ENCODE measurements at regions of chr7 and their contacts with region 1.

Region 1: DNA sequence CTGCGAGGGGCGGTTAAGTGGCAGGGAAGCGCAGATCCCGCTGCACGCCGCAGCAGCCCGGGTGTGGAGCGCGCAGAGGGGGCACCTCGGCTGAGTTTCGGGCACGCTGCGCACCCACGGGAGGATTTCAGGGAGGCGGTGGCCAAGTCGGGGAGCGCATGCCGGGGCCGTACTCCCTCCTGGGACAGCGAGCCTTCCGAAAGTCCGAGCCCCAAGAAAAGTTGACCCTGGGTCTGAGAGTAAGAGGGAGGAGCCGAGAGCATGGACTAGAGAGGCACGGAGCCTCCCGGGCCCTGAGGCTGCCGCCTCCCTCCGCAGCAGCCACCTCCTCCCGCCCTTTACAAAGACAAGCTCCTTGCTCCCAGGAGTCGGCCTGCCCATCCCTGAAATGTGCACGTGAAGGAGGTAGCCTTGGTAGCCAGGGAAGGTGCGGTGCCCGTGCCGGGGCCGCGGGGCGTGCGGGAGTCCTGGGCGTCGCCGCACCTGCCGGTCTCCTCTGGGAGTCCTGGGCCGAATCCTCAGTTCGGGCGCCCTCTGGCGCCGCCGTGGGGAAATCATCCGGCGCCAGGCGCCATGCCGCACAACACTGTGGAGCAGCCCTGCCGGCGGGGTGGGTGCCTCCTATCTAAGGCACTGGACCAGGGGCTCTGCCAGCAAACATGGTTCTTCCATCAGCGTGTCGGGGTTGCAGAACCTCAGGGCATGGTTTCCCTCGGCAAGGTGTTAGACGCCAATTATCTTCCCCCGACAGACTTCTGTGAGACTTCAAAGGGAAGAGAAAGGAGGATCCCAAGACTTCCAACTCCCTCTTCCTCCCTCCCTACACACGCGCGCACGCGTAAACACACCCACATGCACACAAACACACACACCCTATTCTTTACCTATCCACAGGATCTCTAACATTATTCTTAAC is 104.0 kb downstream of the TRIL start:
- DNase-seq: peak; percentile 78 to 93 (median 84)
- H3K4me3 ChIP-seq: peak overlapping the region; percentile 31 to 91 (median 71)
- H3K27ac ChIP-seq: peak overlapping the region in 26 of 59 donors; percentile 6 to 80 (median 46)
- H3K27me3 ChIP-seq: peaks cover 0 to 12% (median 0%) of the 10 kb centered on the region in 45 donors
- CTCF ChIP-seq: peak; percentile 74 to 98 (median 94)

Region 2: GRCh38 chr7:28298870-28299518 is 555.1 kb before region 1 on chr7:
- intact Hi-C with region 1: loop called (anchors 5 to 10 kb)
- DNase-seq: peak in 6 of 10 donors; percentile 43 to 63 (median 48)
- H3K4me3 ChIP-seq: peak overlapping the region in 3 of 59 donors; percentile 4 to 24 (median 17)
- H3K27ac ChIP-seq: peak overlapping the region in 30 of 59 donors; percentile 0 to 72 (median 28)
- H3K27me3 ChIP-seq: no peaks in the 10 kb centered on the region
- CTCF ChIP-seq: peak; percentile 33 to 80 (median 62)

Region 3: DNA sequence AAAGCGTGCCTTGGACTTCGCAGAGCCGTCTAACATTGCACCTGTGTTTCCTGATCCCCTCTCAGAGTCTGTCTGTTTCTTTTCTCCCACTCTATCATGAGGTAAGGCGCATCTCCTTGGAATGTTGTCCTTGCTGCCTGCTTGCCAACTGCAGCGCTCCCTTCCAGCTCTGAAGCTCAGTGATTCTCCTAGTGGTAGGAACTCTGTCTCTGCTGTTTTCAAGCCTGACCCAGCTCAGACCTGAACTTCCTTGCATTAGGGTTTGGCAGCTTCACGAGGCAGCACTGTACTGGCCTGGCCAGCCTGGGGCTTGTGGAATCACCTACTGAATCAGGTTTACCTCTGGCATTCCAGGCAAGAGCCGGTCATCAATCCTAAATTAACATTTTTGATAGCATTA is 317.8 kb before region 1 on chr7:
- intact Hi-C with region 1: loop called in 1 of 2 experiments (anchors 10 kb)
- DNase-seq: no peak
- H3K4me3 ChIP-seq: no peak overlapping the region
- H3K27ac ChIP-seq: no peak overlapping the region
- H3K27me3 ChIP-seq: peaks cover 0 to 2% (median 0%) of the 10 kb centered on the region in 45 donors
- CTCF ChIP-seq: peak in 25 of 56 donors; percentile 7 to 42 (median 20)

Region 4: GRCh38 chr7:28626624-28627262 is 227.3 kb before region 1 on chr7:
- intact Hi-C with region 1: loop called in 1 of 2 experiments (anchors 5 kb)
- DNase-seq: no peak
- H3K4me3 ChIP-seq: no peak overlapping the region
- H3K27ac ChIP-seq: no peak overlapping the region
- H3K27me3 ChIP-seq: no peaks in the 10 kb centered on the region
- CTCF ChIP-seq: peak; percentile 18 to 78 (median 64)

Region 5: DNA sequence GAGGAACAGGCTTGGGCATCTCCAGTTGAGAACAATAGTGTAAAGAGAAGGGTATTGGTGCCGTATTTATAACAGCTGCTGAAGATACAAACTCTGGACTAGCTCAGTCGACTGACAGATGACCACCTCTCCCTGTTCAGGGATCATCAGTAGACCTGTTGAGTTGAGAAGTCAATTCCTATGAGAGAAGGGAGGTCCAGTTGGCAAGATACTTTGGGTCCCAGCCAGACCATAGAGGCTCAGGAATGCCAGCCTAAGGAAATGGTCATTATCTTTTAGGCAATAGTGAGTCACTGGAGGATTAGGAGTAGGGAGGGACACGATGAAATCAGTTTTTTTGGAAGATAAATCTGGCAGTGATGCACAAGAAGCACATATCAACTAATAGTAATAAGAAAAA is 98.8 kb before region 1 on chr7:
- intact Hi-C with region 1: loop called in 1 of 2 experiments (anchors 5 kb)
- DNase-seq: no peak
- H3K4me3 ChIP-seq: no peak overlapping the region
- H3K27ac ChIP-seq: peak overlapping the region; percentile 53 to 98 (median 93)
- H3K27me3 ChIP-seq: no peaks in the 10 kb centered on the region
- CTCF ChIP-seq: no peak

Region 6: GRCh38 chr7:28961972-28962371 is 107.9 kb after region 1 on chr7:
- intact Hi-C with region 1: no loop called
- DNase-seq: no peak
- H3K4me3 ChIP-seq: no peak overlapping the region
- H3K27ac ChIP-seq: no peak overlapping the region
- H3K27me3 ChIP-seq: peaks cover 0 to 12% (median 3%) of the 10 kb centered on the region in 45 donors
- CTCF ChIP-seq: no peak

Region 7: GRCh38 chr7:29146057-29146706 is 292.1 kb after region 1 on chr7 and contains the start of gene CPVL:
- intact Hi-C with region 1: no loop called
- DNase-seq: peak in 8 of 10 donors; percentile 26 to 52 (median 39)
- H3K4me3 ChIP-seq: peak within 1 kb of the TSS; percentile 6 to 70 (median 50)
- H3K27ac ChIP-seq: peak within 1 kb of the TSS in 6 of 59 donors; percentile 7 to 43 (median 20)
- H3K27me3 ChIP-seq: peaks cover 0 to 58% (median 19%) of the 10 kb centered on the region in 45 donors
- CTCF ChIP-seq: no peak
- total RNA-seq, gene CPVL: 1.1 to 20.6 (median 8.7) TPM

Region 8: DNA sequence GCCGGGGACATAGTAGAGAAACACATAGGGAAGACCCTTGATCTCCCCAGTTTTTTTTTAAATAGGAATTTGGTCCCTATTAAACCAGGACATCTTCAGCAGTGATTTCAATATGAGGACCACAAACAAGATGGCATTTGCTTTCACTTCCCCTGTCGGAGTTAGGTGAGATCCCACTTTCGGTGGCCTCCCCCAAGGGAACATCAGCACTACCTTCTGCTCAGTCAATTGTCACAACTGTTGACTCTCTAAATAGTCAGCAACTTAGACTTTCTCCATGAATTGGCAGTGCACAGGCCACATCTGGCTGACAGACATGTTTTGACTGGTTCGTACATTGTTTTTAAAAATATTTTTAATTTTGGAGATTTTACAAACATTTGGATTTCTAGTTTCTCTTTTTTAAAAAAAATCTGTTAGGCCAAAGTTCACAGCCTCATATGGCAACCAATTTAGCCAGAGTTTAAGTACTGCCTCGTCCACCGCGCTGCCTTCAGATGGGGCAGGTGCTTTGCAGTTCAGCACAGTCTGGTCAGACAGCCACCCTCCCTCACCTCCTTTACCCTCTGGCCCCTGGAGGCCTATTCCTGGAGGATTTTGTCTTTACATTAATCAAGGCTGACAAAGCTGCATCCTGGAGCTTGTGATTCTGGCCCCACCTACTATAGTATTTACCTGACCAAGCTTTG is 570.3 kb after region 1 on chr7:
- intact Hi-C with region 1: no loop called
- DNase-seq: no peak
- H3K4me3 ChIP-seq: no peak overlapping the region
- H3K27ac ChIP-seq: no peak overlapping the region
- H3K27me3 ChIP-seq: no peaks in the 10 kb centered on the region
- CTCF ChIP-seq: no peak

Measured in dorsolateral prefrontal cortex (tissue), 120 donors.